Activated CD4-positive, alpha-beta T cell treated with anti-CD3 and anti-CD28 coated beads, Interleukin-2, amount 10 ng/mL, durations not matched to agents 24 days and 14 days (primary cell): ENCODE measurements at regions of chr11 and their contacts with region 1.

Region 1: GRCh38 chr11:59142530-59143507 is at the start of gene FAM111A:
- DNase-seq: peak; percentile 97
- H3K4me3 Mint-ChIP-seq: peak within 1 kb of the TSS; percentile 91
- H3K27ac Mint-ChIP-seq: peak within 1 kb of the TSS; percentile 96
- H3K4me1 Mint-ChIP-seq: peaks cover 59% of the 10 kb centered on the region
- H3K27me3 Mint-ChIP-seq: no peaks in the 10 kb centered on the region
- total RNA-seq, gene FAM111A: 62.2 and 71.2 TPM in 2 replicates

Region 2: GRCh38 chr11:57667736-57668435 is 1474.9 kb before region 1 on chr11 and contains the start of gene ZDHHC5:
- intact Hi-C with region 1: loop called (anchors 5 kb)
- DNase-seq: peak; percentile 100
- H3K4me3 Mint-ChIP-seq: peak within 1 kb of the TSS; percentile 86
- H3K27ac Mint-ChIP-seq: peak within 1 kb of the TSS; percentile 97
- H3K4me1 Mint-ChIP-seq: peaks cover 35% of the 10 kb centered on the region
- H3K27me3 Mint-ChIP-seq: no peaks in the 10 kb centered on the region
- total RNA-seq, gene ZDHHC5: 78.4 and 80.9 TPM in 2 replicates

Region 3: DNA sequence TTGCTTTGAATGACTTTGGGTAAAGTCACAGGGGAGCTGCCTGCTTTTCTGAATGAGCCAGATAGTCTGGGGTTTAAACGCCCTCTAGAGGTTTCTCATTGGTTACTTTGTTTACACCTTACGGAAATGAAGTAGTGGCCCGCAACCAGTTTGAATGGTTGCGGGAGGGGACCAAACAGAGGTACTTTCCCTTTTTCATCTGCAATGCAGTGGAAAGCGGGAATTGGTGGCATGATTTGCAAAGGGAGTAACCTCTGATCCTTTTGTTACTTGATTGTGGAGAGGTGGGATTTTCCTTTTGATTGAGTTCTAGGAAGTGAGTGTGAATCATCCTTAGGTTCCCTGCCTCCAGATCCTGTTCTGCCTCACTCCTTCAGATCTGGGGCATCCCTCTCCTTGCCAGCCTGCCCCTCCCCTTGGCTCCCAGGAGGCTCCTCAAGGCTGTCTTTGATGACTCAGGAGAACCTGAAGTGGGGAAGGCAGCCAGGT is 219.5 kb before region 1 on chr11:
- intact Hi-C with region 1: loop called (anchors 10 kb)
- DNase-seq: peak; percentile 74
- H3K4me3 Mint-ChIP-seq: peak overlapping the region; percentile 48
- H3K27ac Mint-ChIP-seq: no peak overlapping the region
- H3K4me1 Mint-ChIP-seq: peaks cover 13% of the 10 kb centered on the region
- H3K27me3 Mint-ChIP-seq: peaks cover 17% of the 10 kb centered on the region

Region 4: DNA sequence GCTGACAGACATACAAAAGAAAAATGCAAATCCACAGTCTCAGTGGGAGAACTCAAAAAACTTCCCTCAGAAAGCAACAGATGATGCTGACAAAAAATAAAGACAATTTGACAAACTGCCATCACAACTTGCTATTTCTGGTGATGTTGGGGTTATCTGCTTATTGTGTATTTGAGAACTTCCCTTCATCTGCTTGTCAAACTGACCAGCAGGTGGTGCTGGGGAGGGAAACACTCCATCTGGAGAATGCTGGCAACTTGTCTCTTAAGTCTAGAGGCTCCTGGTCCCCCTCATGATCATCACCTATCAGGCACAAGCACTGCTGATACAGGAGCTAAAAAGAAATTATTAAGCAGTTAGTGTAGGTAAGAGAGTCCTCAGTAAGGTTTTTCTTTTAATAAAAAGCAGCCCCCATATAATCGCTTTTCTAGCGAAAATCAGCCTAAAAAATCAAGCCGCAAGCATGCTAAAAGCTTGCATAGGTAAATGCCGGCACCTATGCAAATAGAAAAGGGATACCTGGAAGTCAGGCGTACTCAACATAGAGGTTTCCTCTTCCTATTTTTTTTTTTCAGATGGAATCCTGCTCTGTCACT is 45.6 kb before region 1 on chr11:
- intact Hi-C with region 1: no loop called
- DNase-seq: peak; percentile 90
- H3K4me3 Mint-ChIP-seq: no peak overlapping the region
- H3K27ac Mint-ChIP-seq: no peak overlapping the region
- H3K4me1 Mint-ChIP-seq: peaks cover 12% of the 10 kb centered on the region
- H3K27me3 Mint-ChIP-seq: peaks cover 20% of the 10 kb centered on the region

Region 5: GRCh38 chr11:59158206-59159068 is 15.6 kb after region 1 on chr11:
- intact Hi-C with region 1: loop called (anchors 1 kb)
- DNase-seq: peak; percentile 90
- H3K4me3 Mint-ChIP-seq: no peak overlapping the region
- H3K27ac Mint-ChIP-seq: no peak overlapping the region
- H3K4me1 Mint-ChIP-seq: peaks cover 7% of the 10 kb centered on the region
- H3K27me3 Mint-ChIP-seq: peaks cover 15% of the 10 kb centered on the region

Region 6: DNA sequence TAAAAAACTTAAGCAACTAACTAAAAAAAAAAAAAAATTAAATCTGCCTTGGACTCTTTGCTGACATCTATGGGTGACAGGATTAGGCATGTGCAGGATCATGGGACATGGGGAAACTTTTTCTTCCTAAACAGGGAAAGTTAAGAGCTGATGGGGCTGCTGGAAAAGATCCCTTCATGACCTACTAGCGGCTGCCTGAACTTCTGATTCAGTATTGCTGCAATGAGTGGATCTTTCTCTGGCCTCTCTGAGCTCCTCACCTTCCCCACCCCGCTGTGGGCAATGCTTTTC is 258.4 kb after region 1 on chr11:
- intact Hi-C with region 1: no loop called
- DNase-seq: no peak
- H3K4me3 Mint-ChIP-seq: no peak overlapping the region
- H3K27ac Mint-ChIP-seq: no peak overlapping the region
- H3K4me1 Mint-ChIP-seq: no peaks in the 10 kb centered on the region
- H3K27me3 Mint-ChIP-seq: no peaks in the 10 kb centered on the region

Region 7: GRCh38 chr11:59417023-59417422 is 274.2 kb after region 1 on chr11:
- intact Hi-C with region 1: no loop called
- DNase-seq: no peak
- H3K4me3 Mint-ChIP-seq: no peak overlapping the region
- H3K27ac Mint-ChIP-seq: no peak overlapping the region
- H3K4me1 Mint-ChIP-seq: no peaks in the 10 kb centered on the region
- H3K27me3 Mint-ChIP-seq: peaks cover 20% of the 10 kb centered on the region

Region 8: GRCh38 chr11:59550368-59550841 is 407.6 kb after region 1 on chr11:
- intact Hi-C with region 1: loop called (anchors 10 kb)
- DNase-seq: peak; percentile 95
- H3K4me3 Mint-ChIP-seq: peak overlapping the region; percentile 85
- H3K27ac Mint-ChIP-seq: peak overlapping the region; percentile 88
- H3K4me1 Mint-ChIP-seq: peaks cover 22% of the 10 kb centered on the region
- H3K27me3 Mint-ChIP-seq: peaks cover 15% of the 10 kb centered on the region

Region 9: DNA sequence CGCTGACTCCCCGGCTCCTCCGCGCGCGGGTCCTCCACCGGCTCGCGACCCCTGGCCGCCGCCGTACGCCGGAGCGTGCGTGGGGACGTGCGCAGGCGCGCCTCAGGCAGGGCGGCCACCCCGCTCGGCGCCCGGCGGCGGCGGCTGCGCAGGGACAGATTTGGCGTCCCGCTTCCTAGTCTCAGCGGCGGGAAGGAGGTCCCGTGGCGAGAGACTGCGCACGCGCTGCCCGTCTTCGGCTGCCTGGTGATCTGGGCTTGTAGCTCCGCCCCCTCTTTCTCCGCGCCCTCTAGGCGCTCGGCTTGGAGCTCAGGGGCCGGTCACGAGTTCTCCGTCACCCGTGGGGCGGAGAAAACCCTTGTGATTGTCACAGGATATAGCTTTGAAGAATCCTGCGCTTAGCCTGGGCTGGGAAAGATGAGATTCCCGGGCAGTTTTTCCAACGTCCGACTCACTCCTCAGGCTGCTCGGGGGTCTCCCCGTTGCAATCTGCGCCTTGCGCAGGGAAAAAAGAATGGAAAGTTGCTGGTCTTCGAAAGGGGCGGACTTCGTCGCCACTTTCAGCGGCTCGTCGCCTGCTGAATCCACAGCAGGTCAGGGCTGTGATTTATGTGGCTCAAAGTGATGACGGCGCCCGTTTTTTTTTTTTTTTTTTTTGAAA is 526.3 kb after region 1 on chr11 and contains the start of gene PATL1:
- intact Hi-C with region 1: loop called (anchors 2 kb)
- DNase-seq: peak; percentile 100
- H3K4me3 Mint-ChIP-seq: peak within 1 kb of the TSS; percentile 98
- H3K27ac Mint-ChIP-seq: peak within 1 kb of the TSS; percentile 97
- H3K4me1 Mint-ChIP-seq: peaks cover 40% of the 10 kb centered on the region
- H3K27me3 Mint-ChIP-seq: peaks cover 1% of the 10 kb centered on the region
- total RNA-seq, gene PATL1: 72.4 and 76.1 TPM in 2 replicates